ENCODE measurements at regions of chr7 and their contacts with region 1.

Region 1: GRCh38 chr7:2471396-2471795 is 4.8 kb downstream of the GRIFIN start:
- DNase-seq: peak; percentile 55
- ATAC-seq: peak; percentile 33
- H3K4me3 Mint-ChIP-seq: no peak overlapping the region
- H3K27ac Mint-ChIP-seq: no peak overlapping the region
- H3K4me1 Mint-ChIP-seq: peaks cover 31% of the 10 kb centered on the region
- H3K27me3 Mint-ChIP-seq: no peaks in the 10 kb centered on the region
- CTCF ChIP-seq: no peak

Region 2: DNA sequence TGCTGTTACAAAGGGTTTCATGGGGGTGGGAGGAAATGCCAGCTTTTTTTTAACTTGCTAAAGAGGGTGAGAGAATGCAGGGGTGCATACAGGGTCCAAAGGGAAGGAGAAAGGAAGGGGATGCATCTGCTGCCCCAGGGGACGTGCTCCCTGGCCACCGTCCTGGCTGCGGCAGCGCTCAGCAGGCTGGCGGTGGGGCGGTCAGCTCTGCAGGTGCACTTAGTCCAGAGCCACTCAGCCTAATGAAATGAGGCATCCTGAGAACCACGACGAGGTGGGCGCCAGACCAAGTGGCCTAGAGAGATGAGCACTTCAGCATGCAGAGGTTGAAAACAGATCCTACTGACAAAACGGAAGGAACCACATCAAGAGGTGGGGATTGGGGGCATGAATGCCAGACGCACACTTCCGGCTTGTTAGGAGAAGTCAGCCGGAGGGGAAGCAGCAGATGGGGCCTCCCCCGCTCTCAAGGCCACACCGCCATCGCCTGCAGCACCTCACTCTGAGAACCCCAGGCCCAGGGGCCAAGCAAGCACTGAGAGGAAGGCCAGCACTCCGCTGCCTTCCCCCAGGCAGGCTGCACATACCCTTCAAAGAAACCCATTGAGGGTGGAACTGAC is 333.1 kb before region 1 on chr7:
- CTCF ChIA-PET with region 1: no interaction called
- POLR2A ChIA-PET with region 1: no interaction called
- DNase-seq: no peak
- ATAC-seq: no peak
- H3K4me3 Mint-ChIP-seq: no peak overlapping the region
- H3K27ac Mint-ChIP-seq: peak overlapping the region; percentile 22; the same call in 1 of the 2 replicates
- H3K4me1 Mint-ChIP-seq: peaks cover 7% of the 10 kb centered on the region
- H3K27me3 Mint-ChIP-seq: no peaks in the 10 kb centered on the region
- CTCF ChIP-seq: no peak

Region 3: DNA sequence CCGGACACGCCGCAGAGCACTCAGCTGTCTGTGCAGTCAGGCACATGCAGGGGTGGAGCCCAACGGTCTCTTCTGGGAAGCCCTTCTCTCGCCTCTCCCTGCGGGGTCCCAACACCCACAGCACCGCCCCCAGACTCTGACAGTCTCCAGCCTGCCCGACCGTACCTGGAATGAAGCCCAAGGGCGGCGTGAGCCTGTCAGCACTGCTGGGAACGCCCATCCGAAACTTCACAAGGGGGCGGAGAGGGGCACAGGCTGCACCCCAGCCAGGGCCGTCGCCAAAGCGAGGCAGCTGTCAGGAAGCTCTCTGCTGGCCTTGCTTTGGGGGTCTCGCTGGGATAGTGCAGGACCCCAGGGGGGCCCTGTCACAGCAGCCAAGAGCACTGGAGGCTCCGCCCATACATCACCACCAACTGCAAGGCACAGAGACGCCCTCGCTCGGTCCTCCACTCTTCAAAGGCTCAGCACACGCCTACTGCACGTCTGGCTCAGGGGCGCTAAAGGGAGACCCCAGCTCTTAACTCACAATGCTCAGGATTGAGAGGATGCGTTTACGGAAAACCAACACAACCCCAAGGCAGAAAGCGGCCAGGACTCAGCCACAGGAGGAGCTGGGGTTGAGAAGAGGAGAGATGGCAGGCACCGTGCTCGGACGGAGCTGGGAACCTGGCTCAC is 269.6 kb before region 1 on chr7:
- CTCF ChIA-PET with region 1: no interaction called
- POLR2A ChIA-PET with region 1: no interaction called
- DNase-seq: no peak
- ATAC-seq: no peak
- H3K4me3 Mint-ChIP-seq: no peak overlapping the region
- H3K27ac Mint-ChIP-seq: peak overlapping the region; percentile 41; the same call in 1 of the 2 replicates
- H3K4me1 Mint-ChIP-seq: no peaks in the 10 kb centered on the region
- H3K27me3 Mint-ChIP-seq: no peaks in the 10 kb centered on the region
- CTCF ChIP-seq: no peak

Region 4: DNA sequence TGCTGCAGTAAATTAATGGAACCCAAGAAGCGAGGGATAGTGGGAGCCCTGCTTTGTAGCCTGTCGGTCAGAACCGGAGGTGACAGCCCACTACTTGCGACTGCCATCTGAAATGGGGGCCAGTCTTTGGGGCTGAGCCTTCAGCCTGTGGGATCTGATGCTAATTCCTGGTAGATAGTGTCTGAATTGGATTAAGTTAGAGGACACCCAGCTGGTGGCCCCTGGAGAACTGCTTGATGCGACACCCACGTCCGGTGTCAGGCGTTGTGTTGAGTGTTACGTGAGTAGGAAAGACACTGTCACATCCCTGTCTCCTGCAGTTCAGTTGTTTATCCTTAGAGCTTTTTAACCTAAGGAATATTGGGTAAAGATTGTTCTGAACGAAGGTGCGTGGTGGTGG is 111.8 kb before region 1 on chr7:
- CTCF ChIA-PET with region 1: no interaction called
- POLR2A ChIA-PET with region 1: no interaction called
- DNase-seq: no peak
- ATAC-seq: no peak
- H3K4me3 Mint-ChIP-seq: no peak overlapping the region
- H3K27ac Mint-ChIP-seq: peak overlapping the region; percentile 47
- H3K4me1 Mint-ChIP-seq: peaks cover 25% of the 10 kb centered on the region
- H3K27me3 Mint-ChIP-seq: no peaks in the 10 kb centered on the region
- CTCF ChIP-seq: no peak

Region 5: GRCh38 chr7:2431260-2431867 is 40.0 kb before region 1 on chr7:
- CTCF ChIA-PET with region 1: interaction called, 18 read pairs
- POLR2A ChIA-PET with region 1: no interaction called
- DNase-seq: peak; percentile 66
- ATAC-seq: peak; percentile 97
- H3K4me3 Mint-ChIP-seq: no peak overlapping the region
- H3K27ac Mint-ChIP-seq: no peak overlapping the region
- H3K4me1 Mint-ChIP-seq: no peaks in the 10 kb centered on the region
- H3K27me3 Mint-ChIP-seq: no peaks in the 10 kb centered on the region
- CTCF ChIP-seq: peak; percentile 74

Region 6: GRCh38 chr7:2497500-2498336 is 26.3 kb after region 1 on chr7:
- CTCF ChIA-PET with region 1: interaction called, 66 read pairs
- POLR2A ChIA-PET with region 1: no interaction called
- DNase-seq: no peak
- ATAC-seq: peak; percentile 10
- H3K4me3 Mint-ChIP-seq: no peak overlapping the region
- H3K27ac Mint-ChIP-seq: peak overlapping the region; percentile 36; the same call in 1 of the 2 replicates
- H3K4me1 Mint-ChIP-seq: peaks cover 42% of the 10 kb centered on the region
- H3K27me3 Mint-ChIP-seq: no peaks in the 10 kb centered on the region; the same call in 1 of the 2 replicates
- CTCF ChIP-seq: no peak

Region 7: DNA sequence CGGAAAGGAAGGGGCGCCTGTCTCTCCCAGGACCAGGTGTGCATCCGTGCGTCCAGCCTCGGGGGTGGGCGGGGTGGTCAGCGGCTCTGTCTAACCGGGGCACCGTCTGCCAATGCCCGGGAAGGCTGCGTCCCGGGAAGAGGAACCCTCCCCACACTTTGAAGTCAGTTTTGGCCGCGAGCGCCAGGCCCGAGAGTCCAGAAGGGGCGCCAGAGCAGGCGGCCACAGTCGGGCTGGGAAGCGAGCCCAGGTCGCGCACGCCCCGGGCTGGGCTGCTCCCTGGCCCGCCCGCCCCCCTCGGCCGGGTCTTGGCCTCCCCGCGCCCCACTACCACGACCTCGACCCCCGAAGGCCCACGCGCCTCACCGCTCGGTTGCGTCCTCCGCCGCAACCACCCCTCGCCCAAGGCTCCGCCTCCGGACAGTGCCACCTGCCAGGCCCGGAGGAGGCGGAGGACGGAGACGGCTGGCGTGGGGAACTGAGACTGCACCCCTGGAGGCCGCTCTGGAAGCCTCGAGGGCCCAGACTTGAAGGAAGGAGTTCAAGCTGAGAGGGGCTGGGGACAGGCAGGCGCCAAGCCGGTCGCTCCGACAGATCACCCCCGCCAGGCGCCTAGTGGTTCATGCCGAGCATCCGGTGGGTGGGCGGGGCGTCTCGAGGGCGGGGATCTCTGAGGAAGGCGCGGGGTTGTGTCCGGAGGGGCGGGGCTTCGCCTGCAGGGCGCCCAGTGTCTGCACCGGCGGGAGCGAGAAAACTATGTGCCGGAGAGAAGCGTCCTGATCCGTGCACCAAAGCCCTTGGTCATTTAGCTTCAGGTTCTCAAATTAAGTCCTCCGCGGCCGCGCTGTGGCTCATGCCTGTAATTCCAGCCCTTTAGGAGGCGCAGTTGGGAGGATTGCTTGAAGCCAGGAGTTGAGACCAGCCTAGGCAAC is 84.0 kb after region 1 on chr7 and contains the start of gene BRAT1:
- CTCF ChIA-PET with region 1: interaction called, 15 read pairs
- POLR2A ChIA-PET with region 1: no interaction called
- DNase-seq: peak; percentile 99
- ATAC-seq: peak; percentile 90
- H3K4me3 Mint-ChIP-seq: peak within 1 kb of the TSS; percentile 82
- H3K27ac Mint-ChIP-seq: peak within 1 kb of the TSS; percentile 93
- H3K4me1 Mint-ChIP-seq: peaks cover 12% of the 10 kb centered on the region
- H3K27me3 Mint-ChIP-seq: no peaks in the 10 kb centered on the region
- CTCF ChIP-seq: no peak
- total RNA-seq, gene BRAT1: 44.0 to 50.0 TPM (median 46.1 TPM) in 3 replicates

Region 8: GRCh38 chr7:2670720-2671391 is 199.5 kb after region 1 on chr7:
- CTCF ChIA-PET with region 1: interaction called, 11 read pairs
- POLR2A ChIA-PET with region 1: no interaction called
- DNase-seq: peak; percentile 85
- ATAC-seq: peak; percentile 94
- H3K4me3 Mint-ChIP-seq: no peak overlapping the region
- H3K27ac Mint-ChIP-seq: no peak overlapping the region
- H3K4me1 Mint-ChIP-seq: no peaks in the 10 kb centered on the region
- H3K27me3 Mint-ChIP-seq: peaks cover 11% of the 10 kb centered on the region
- CTCF ChIP-seq: peak; percentile 77

Measured in WTC11 (cell line).